A673 (cell line): ENCODE measurements at regions of chr19 and their contacts with region 1.

Region 1: GRCh38 chr19:10748924-10749434 is 31.1 kb downstream of the DNM2 start:
- DNase-seq: no peak
- H3K4me3 ChIP-seq: no peak overlapping the region
- H3K27ac ChIP-seq: peak overlapping the region; percentile 59
- H3K4me1 ChIP-seq: peaks cover 4% of the 10 kb centered on the region
- H3K27me3 ChIP-seq: no peaks in the 10 kb centered on the region
- CTCF ChIP-seq: no peak

Region 2: GRCh38 chr19:9406798-9407352 is 1342.1 kb before region 1 on chr19:
- CTCF ChIA-PET with region 1: no interaction called
- POLR2A ChIA-PET with region 1: no interaction called
- intact Hi-C with region 1: no loop called
- DNase-seq: peak; percentile 88
- H3K4me3 ChIP-seq: peak overlapping the region; percentile 46
- H3K27ac ChIP-seq: no peak overlapping the region
- H3K4me1 ChIP-seq: no peaks in the 10 kb centered on the region
- H3K27me3 ChIP-seq: no peaks in the 10 kb centered on the region
- CTCF ChIP-seq: no peak

Region 3: DNA sequence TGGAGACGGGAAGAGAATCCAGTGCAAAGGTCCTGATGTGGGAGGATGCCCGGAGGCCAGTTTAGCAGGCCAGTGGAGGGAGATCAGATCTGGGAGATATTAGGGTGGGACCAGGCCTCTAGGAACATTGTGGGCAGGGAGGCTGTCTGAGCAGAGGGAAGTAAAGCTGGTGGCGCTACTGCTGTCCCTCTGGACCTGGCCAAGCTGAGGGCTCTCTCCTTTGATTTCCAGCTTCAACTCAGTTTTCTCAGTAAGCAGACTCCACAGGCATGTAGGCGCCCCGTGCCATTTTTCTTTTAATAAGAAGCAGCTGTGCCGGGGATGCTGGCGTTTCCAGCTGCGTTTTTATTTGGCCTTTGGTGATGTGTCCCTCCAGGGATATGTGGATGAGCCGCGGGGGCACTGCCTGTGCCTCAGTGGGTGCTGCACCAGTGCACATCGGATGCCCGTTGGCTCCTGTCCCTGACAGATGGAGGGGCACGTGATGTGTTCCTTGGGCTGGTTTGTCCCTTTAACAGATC is 24.4 kb before region 1 on chr19:
- CTCF ChIA-PET with region 1: no interaction called
- POLR2A ChIA-PET with region 1: no interaction called
- intact Hi-C with region 1: no loop called
- DNase-seq: peak; percentile 69
- H3K4me3 ChIP-seq: no peak overlapping the region
- H3K27ac ChIP-seq: peak overlapping the region; percentile 54
- H3K4me1 ChIP-seq: peaks cover 14% of the 10 kb centered on the region
- H3K27me3 ChIP-seq: no peaks in the 10 kb centered on the region
- CTCF ChIP-seq: no peak

Region 4: DNA sequence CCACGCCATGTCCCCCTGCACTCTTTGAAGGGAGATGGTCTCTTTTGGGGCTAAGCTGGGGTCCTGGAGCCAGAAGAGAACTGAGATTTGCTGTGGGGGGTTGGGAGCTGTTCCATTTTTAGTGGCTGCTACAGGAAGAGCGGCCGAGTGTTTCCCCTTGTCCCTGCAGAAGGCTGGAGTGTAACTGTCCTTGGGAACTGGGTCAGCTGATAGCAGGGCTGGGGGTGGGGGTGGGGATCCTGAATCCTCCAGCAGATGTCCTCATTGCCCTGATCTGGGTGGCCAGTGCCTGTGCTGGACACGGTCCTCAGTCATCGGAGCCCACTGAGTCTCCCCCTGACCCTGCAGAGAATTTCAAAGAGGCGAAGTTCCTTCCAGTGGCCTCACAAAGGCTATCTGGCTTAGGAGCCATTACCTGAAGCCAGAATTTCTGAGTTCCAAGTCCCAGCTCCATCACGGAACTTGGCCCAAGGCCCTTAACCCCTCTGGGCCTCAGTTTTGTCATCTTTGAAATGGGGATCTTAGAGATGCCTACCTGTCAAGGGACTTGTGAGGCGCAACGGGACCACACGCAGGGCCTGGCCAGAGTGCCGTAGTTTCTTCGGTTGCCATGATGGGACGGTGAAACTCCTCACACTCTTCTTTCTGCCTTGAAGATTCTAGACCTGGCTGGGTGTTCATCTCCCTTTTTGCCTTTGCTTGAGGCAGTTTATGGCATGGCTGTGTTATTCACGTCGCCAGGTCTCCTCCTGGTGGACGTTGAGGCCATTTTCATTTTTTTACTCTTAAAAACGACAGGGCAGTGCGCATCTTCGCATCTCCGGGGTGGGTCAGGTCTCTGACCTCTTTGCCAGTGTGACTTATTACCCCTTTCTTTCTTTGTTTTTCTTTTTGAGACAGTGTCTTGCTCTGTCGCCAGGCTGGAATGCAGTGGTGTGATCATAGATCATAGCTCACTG is 20.8 kb after region 1 on chr19:
- CTCF ChIA-PET with region 1: no interaction called
- POLR2A ChIA-PET with region 1: interaction called, 22 read pairs
- intact Hi-C with region 1: no loop called
- DNase-seq: no peak
- H3K4me3 ChIP-seq: no peak overlapping the region
- H3K27ac ChIP-seq: no peak overlapping the region
- H3K4me1 ChIP-seq: peaks cover 14% of the 10 kb centered on the region
- H3K27me3 ChIP-seq: no peaks in the 10 kb centered on the region
- CTCF ChIP-seq: no peak